PC-9 (cell line): ENCODE measurements at regions of chr10 and their contacts with region 1.

Region 1: GRCh38 chr10:101686133-101686925 is 8.6 kb downstream of the FBXW4 start:
- DNase-seq: no peak
- H3K4me3 ChIP-seq: no peak overlapping the region
- H3K27ac ChIP-seq: no peak overlapping the region
- H3K4me1 ChIP-seq: no peaks in the 10 kb centered on the region
- H3K27me3 ChIP-seq: no peaks in the 10 kb centered on the region
- CTCF ChIP-seq: no peak

Region 2: DNA sequence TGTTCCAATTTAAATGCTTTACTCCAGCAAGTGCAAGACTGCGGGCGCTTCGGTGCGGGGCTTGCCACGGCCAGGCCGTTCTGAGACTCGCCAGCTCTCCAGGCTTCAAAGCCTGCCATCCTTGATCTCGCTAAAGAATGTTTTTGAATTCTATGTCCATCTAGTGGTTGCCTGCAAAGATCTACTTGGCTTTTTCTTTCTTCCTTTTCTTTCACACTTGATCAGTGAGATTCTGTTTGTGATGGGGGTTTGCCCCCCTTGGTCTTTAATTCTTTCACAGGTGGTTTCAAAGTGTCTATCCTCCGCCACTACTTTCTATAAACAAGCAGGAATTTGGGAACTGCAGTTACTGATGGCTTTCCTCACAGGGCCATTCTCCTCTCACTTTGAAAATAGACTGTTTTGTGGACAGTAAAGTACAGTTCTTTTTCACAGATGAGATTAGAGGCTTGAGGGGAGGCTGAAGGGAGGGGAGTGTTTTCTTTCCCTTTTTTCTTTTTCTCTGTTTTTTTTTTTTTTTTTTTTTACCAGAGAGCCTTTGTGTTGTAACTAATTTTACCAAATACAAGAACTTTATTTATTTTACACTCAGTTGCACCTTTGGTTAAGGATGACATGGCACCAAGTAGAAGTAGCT is 23.8 kb after region 1 on chr10:
- CTCF ChIA-PET with region 1: no interaction called
- POLR2A ChIA-PET with region 1: interaction called, 10 read pairs
- intact Hi-C with region 1: no loop called
- DNase-seq: no peak
- H3K4me3 ChIP-seq: no peak overlapping the region
- H3K27ac ChIP-seq: no peak overlapping the region
- H3K4me1 ChIP-seq: no peaks in the 10 kb centered on the region
- H3K27me3 ChIP-seq: no peaks in the 10 kb centered on the region
- CTCF ChIP-seq: no peak